ENCODE measurements at regions of chr5 and their contacts with region 1.

Region 1: GRCh38 chr5:54090495-54091084 is 219.8 kb downstream of the ARL15 start:
- DNase-seq: no peak
- H3K4me3 ChIP-seq: no peak overlapping the region
- H3K27ac ChIP-seq: no peak overlapping the region
- H3K4me1 ChIP-seq: no peaks in the 10 kb centered on the region
- H3K27me3 ChIP-seq: no peaks in the 10 kb centered on the region
- CTCF ChIP-seq: no peak

Region 2: GRCh38 chr5:53425598-53426511 is 664.7 kb before region 1 on chr5:
- intact Hi-C with region 1: no loop called
- DNase-seq: no peak
- H3K4me3 ChIP-seq: no peak overlapping the region
- H3K27ac ChIP-seq: no peak overlapping the region
- H3K4me1 ChIP-seq: peaks cover 0 to 2% of the 10 kb centered on the region in 2 donors
- H3K27me3 ChIP-seq: no peaks in the 10 kb centered on the region
- CTCF ChIP-seq: no peak

Region 3: DNA sequence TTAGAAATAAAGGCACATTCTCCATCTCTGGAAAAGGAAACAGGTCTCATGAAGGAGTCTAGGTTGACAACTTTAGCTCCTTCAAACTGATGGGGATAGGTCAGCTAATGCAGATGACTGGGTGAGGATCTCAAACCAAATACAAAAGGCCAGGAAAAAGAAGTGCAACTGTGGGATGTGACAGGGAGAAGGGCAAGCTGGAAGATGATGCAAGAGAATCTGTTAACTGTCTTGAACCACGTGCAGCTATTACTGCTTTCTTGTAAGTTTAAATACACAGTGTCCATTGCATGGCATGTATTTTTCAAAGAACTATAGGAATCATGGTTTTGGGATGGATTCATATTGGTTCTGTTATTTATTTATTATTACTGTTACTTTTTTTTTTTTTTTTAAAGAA is 198.4 kb before region 1 on chr5:
- intact Hi-C with region 1: no loop called
- DNase-seq: no peak
- H3K4me3 ChIP-seq: no peak overlapping the region
- H3K27ac ChIP-seq: no peak overlapping the region
- H3K4me1 ChIP-seq: no peaks in the 10 kb centered on the region
- H3K27me3 ChIP-seq: no peaks in the 10 kb centered on the region
- CTCF ChIP-seq: no peak

Region 4: GRCh38 chr5:54049963-54050362 is 40.6 kb before region 1 on chr5:
- intact Hi-C with region 1: no loop called
- DNase-seq: no peak
- H3K4me3 ChIP-seq: no peak overlapping the region
- H3K27ac ChIP-seq: no peak overlapping the region
- H3K4me1 ChIP-seq: no peaks in the 10 kb centered on the region
- H3K27me3 ChIP-seq: no peaks in the 10 kb centered on the region
- CTCF ChIP-seq: no peak

Region 5: GRCh38 chr5:54171645-54172384 is 81.2 kb after region 1 on chr5:
- intact Hi-C with region 1: no loop called
- DNase-seq: no peak
- H3K4me3 ChIP-seq: no peak overlapping the region
- H3K27ac ChIP-seq: no peak overlapping the region
- H3K4me1 ChIP-seq: no peaks in the 10 kb centered on the region
- H3K27me3 ChIP-seq: no peaks in the 10 kb centered on the region
- CTCF ChIP-seq: no peak

Region 6: DNA sequence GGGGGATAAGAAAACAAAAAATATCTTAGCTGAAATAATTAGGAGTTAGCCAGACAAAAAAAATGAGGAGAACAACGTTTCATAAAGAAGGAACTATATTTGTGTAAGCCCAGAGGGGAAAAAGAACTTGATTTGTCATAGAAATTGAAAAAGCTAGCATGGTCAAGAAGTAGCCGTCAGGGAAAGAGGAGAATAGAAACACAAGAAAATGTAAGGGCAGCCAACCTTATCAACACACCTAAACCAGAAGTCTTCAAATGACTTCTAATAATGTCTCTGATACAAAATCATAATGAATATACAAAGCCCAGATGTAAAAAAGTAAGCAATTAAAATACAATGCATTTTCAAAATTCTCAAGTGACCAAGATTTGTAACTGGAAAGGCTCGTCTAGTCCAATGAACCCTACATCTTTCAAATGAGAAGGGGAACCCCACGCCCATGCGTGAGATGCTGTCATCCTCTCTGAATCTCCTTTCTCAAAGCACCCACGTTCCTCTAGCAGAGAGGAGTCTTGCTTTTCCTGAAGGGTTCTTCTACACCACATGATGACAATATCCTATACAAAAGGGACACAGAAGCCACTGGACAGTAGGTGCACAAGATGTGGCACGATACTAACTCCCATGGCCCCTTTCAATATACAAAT is 116.1 kb after region 1 on chr5:
- intact Hi-C with region 1: loop called (anchors 10 kb)
- DNase-seq: no peak
- H3K4me3 ChIP-seq: no peak overlapping the region
- H3K27ac ChIP-seq: no peak overlapping the region
- H3K4me1 ChIP-seq: no peaks in the 10 kb centered on the region
- H3K27me3 ChIP-seq: no peaks in the 10 kb centered on the region
- CTCF ChIP-seq: no peak